GM13976 (cell line): ENCODE measurements at regions of chr3 and their contacts with region 1.

Region 1: DNA sequence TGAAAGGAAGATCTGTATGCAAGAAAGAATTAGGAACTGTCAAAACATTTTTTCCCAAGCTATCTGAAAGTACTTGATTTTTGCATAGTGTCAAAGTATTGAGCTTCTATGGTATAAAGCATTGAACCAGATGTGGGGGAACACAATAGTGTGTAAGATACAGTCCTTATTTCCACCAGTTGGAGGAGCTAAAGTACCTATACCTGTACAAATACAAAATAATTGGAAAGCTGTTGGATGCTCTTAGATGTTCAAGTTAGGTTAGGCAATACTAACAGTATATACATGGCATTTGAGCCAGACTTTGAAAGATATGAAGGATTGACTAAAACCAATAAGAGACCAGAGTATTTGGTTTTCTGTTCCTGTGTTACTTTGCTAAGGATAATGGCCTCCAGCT is 148.3 kb downstream of the B3GALNT1 start:
- DNase-seq: peak; percentile 49
- CTCF ChIP-seq: peak; percentile 47

Region 2: GRCh38 chr3:160302806-160303205 is 654.0 kb before region 1 on chr3:
- in situ Hi-C with region 1: no loop called
- DNase-seq: no peak
- CTCF ChIP-seq: no peak

Region 3: GRCh38 chr3:161220850-161221753 is 264.3 kb after region 1 on chr3 and contains the start of gene NMD3:
- in situ Hi-C with region 1: loop called (anchors 25 kb)
- DNase-seq: peak; percentile 94
- CTCF ChIP-seq: no peak

Region 4: GRCh38 chr3:161266731-161267166 is 309.9 kb after region 1 on chr3:
- in situ Hi-C with region 1: no loop called
- DNase-seq: no peak
- CTCF ChIP-seq: no peak

Region 5: GRCh38 chr3:161295325-161295724 is 338.5 kb after region 1 on chr3:
- in situ Hi-C with region 1: no loop called
- DNase-seq: no peak
- CTCF ChIP-seq: no peak